ENCODE measurements at regions of chr3 and their contacts with region 1.

Region 1: DNA sequence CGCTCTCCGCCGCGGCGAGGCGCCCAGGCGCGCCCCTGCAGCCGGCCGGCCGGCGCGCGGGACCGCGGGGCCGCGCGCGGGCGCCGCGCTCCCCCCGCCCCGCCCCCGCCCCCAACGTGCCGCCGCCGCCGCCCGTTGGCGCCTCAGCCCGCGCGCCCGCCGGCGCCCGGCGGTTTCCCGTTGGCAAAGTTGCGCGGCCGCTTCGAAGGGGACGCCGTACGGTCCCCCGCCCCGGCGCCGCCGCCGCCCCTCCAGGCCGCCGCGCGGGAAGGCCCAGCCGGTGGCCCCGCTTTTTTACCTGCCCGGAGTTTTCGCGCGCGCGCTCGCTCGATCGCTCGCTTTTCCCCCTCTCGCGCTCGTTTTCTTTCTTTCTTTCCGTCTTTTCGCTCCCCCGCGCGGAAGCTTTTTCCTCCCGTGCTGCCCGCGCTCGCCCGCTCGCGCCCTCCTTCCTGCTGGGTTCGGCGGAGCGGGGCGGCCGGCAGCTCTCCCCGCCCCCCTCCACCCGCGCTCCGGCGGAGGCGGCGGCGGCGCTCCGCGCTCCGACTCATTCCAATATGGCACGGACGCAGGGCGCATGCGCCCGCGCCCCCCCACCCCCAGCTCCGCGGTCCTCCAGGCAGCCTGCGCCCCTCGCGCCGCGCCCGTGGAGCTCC is at the start of gene SFMBT1:
- DNase-seq: peak; percentile 46
- H3K4me3 Mint-ChIP-seq: peak within 1 kb of the TSS; percentile 83
- H3K27ac Mint-ChIP-seq: peak within 1 kb of the TSS; percentile 57
- H3K4me1 Mint-ChIP-seq: peaks cover 10% of the 10 kb centered on the region
- H3K27me3 Mint-ChIP-seq: no peaks in the 10 kb centered on the region
- CTCF ChIP-seq: no peak
- total RNA-seq, gene SFMBT1: 11.5 and 11.8 TPM in 2 replicates

Region 2: DNA sequence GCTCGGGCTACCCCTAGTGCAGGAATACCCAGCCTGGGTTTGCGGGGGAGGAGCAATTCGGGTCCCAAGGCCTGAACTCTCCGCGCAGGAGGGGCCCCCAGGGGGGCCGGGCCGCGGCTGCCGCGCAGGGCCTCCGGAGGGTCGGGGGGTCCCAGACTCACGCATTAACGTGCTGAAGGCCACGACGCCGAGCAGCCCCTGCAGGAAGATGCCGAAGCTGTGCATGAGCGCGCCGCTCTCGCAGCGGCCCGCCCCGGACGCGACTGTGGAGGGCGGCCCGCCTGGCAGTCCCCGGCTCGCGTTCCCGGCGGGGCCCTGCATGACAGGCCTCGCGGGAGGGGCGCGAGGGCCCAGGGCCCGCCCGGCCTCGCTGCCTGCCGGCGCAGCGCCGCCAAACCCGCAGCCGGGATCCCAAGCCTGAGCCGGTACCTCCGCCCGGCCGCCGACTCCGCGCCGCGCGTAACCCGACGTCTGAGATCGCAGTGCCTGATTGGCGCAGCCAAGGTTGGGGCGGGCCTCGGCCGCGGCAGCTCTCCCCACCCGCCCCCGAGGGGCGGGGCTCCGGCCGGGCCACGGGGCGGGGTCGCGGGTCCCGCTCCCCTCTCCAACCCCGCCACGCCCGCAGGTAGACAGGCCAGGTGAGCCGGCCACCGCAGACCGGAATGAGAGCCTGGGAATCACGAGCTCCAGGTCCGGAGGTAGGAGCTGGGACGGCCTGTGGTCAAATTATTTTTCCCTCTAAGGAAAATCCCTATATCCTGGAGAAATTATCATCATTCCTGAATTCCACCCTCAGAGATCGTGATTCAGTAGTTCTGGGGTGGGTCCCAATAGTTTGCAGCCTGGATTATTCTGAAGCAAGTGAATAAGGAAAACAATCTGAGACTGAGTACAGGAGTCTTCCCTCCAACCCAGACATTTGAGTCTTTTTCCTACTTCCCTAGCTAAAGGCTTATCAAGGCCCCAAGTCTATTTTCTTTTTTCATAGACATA is 148.2 kb before region 1 on chr3 and contains the start of gene STIMATE:
- CTCF ChIA-PET with region 1: interaction called, 3 read pairs
- POLR2A ChIA-PET with region 1: interaction called, 6 read pairs
- intact Hi-C with region 1: loop called (anchors 5 kb)
- DNase-seq: peak; percentile 80
- H3K4me3 Mint-ChIP-seq: peak within 1 kb of the TSS; percentile 86
- H3K27ac Mint-ChIP-seq: no peak within 1 kb of the TSS
- H3K4me1 Mint-ChIP-seq: peaks cover 13% of the 10 kb centered on the region
- H3K27me3 Mint-ChIP-seq: no peaks in the 10 kb centered on the region
- CTCF ChIP-seq: no peak
- total RNA-seq, gene STIMATE: 12.0 and 12.9 TPM in 2 replicates

Region 3: DNA sequence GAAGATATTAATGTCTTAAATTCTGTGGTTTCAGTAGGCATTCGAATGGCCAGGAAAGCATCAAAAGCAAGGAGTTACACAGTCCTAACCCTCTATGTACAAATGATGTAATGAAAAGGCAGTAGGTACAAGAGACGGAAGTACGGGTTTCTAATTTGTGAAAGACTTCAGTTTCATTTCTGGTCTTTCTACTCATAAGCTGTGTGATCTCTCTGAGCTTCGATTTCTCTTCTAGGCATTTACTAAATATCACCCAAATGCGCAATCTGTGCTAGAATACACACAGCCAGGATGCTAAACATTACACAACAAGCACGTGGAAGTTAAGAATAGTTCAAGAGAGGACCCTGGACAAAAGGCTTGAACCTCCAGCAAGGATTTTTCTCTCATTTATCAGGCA is 130.3 kb before region 1 on chr3:
- CTCF ChIA-PET with region 1: no interaction called
- POLR2A ChIA-PET with region 1: no interaction called
- intact Hi-C with region 1: no loop called
- DNase-seq: no peak
- H3K4me3 Mint-ChIP-seq: no peak overlapping the region
- H3K27ac Mint-ChIP-seq: no peak overlapping the region
- H3K4me1 Mint-ChIP-seq: no peaks in the 10 kb centered on the region
- H3K27me3 Mint-ChIP-seq: no peaks in the 10 kb centered on the region
- CTCF ChIP-seq: no peak

Region 4: DNA sequence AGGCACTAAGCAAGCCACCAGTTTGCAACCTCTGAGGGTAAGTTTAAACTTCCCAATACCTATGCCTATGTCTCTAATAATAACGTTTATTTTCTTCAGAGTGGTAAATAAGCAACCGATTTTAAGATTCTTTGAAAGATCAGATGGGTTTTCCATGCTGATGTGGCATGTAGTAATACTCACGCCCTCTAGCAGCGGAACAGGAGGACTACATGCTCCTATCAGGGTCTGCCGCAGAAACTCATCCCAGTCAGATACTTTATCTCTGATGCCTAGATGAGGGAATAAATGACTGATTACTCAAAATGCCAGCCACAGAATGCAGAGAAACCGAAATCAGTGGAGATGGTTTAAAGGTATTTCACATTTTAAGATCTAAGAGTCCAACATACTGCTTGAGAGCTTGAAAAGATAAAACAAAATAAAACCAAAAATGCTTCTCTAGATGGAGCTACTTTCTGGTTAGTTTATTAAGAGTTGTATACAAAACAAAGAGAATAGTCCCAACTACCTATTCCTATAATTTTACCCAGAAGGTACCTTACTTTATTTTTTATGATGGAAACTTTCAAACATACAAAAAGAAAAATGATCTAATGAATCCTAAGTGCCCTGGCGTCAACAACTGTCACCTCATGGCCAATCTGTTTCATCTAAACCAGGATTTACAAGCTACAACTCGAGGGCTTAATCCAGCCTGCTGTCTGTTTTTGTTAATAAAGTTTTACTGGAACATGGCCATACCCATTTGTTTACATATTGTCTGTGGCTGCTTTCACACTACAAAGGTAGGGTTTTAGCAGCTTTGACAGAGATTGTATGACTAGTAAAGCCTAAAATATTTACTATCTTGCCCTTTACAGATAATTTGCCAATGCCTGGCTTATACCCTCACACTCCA is 110.8 kb before region 1 on chr3:
- CTCF ChIA-PET with region 1: no interaction called
- POLR2A ChIA-PET with region 1: interaction called, 3 read pairs
- intact Hi-C with region 1: loop called (anchors 1 kb)
- DNase-seq: peak; percentile 68
- H3K4me3 Mint-ChIP-seq: no peak overlapping the region
- H3K27ac Mint-ChIP-seq: no peak overlapping the region
- H3K4me1 Mint-ChIP-seq: no peaks in the 10 kb centered on the region
- H3K27me3 Mint-ChIP-seq: no peaks in the 10 kb centered on the region
- CTCF ChIP-seq: peak; percentile 53

Region 5: GRCh38 chr3:52983336-52983807 is 62.3 kb before region 1 on chr3:
- CTCF ChIA-PET with region 1: interaction called, 3 read pairs
- POLR2A ChIA-PET with region 1: interaction called, 23 read pairs
- intact Hi-C with region 1: no loop called
- DNase-seq: no peak
- H3K4me3 Mint-ChIP-seq: no peak overlapping the region
- H3K27ac Mint-ChIP-seq: no peak overlapping the region
- H3K4me1 Mint-ChIP-seq: peaks cover 19% of the 10 kb centered on the region
- H3K27me3 Mint-ChIP-seq: no peaks in the 10 kb centered on the region
- CTCF ChIP-seq: no peak

Region 6: DNA sequence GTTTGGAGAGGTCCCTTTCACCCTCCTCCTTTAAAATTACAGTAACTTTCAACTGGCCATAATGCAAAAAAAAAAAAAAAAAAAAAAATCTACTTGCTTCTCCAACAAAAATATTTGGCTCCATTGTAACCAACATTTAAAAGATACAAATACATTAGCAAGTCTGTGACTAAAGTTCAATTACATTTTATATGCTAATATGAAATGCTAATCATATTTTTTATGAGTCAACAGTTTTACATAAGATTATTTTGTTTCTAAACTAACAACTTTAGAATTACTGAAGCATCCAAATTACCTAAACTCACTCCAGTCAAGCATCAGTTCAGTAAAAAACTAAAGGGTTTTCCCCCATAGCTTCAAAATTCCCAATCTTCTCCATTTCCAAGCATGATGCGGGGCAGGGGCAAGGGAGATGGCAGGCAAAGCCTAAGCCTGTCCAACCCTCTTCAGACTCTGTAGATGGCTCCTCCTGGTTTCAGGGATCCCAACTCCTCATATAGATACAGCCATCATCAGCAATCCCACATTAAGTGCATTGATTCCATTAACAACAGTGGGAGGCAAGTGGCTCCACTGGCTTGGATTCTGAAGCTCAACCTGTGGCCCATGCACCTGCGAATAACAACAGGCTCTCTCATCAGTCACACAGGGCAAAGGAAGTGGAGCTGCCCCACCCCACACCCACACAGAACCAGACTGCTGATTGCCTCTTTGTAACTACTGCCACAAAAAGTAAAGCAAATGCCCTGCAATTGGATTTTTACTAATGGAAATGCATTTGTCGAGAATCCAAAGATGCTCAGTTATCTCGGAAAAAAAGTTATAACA is 14.8 kb before region 1 on chr3:
- CTCF ChIA-PET with region 1: interaction called, 5 read pairs
- POLR2A ChIA-PET with region 1: interaction called, 25 read pairs
- intact Hi-C with region 1: no loop called
- DNase-seq: peak; percentile 24
- H3K4me3 Mint-ChIP-seq: no peak overlapping the region
- H3K27ac Mint-ChIP-seq: no peak overlapping the region
- H3K4me1 Mint-ChIP-seq: peaks cover 6% of the 10 kb centered on the region
- H3K27me3 Mint-ChIP-seq: no peaks in the 10 kb centered on the region
- CTCF ChIP-seq: no peak

Measured in MCF 10A (cell line).